A673 (cell line): ENCODE measurements at regions of chr14 and their contacts with region 1.

Region 1: GRCh38 chr14:24310646-24311604 is at the start of gene LTB4R:
- DNase-seq: peak; percentile 54
- H3K4me3 ChIP-seq: no peak within 1 kb of the TSS
- H3K27ac ChIP-seq: no peak within 1 kb of the TSS
- H3K4me1 ChIP-seq: peaks cover 13% of the 10 kb centered on the region
- H3K27me3 ChIP-seq: no peaks in the 10 kb centered on the region
- CTCF ChIP-seq: peak; percentile 15; the same call in 1 of the 2 replicates
- total RNA-seq, gene LTB4R: 6.6 and 8.9 TPM in 2 replicates

Region 2: GRCh38 chr14:24241829-24242443 is 69.0 kb before region 1 on chr14:
- CTCF ChIA-PET with region 1: interaction called, 21 read pairs
- POLR2A ChIA-PET with region 1: no interaction called
- intact Hi-C with region 1: no loop called
- DNase-seq: peak; percentile 96
- H3K4me3 ChIP-seq: peak overlapping the region; percentile 57
- H3K27ac ChIP-seq: peak overlapping the region; percentile 95
- H3K4me1 ChIP-seq: peaks cover 10% of the 10 kb centered on the region
- H3K27me3 ChIP-seq: no peaks in the 10 kb centered on the region
- CTCF ChIP-seq: peak; percentile 47

Region 3: GRCh38 chr14:24299255-24300195 is 11.4 kb before region 1 on chr14 and contains the starts of genes DHRS1 and NOP9:
- CTCF ChIA-PET with region 1: interaction called, 10 read pairs
- POLR2A ChIA-PET with region 1: interaction called, 4 read pairs
- intact Hi-C with region 1: no loop called
- DNase-seq: peak; percentile 90
- H3K4me3 ChIP-seq: peak within 1 kb of the TSS; percentile 92
- H3K27ac ChIP-seq: peak within 1 kb of the TSS; percentile 82
- H3K4me1 ChIP-seq: no peaks in the 10 kb centered on the region
- H3K27me3 ChIP-seq: no peaks in the 10 kb centered on the region
- CTCF ChIP-seq: no peak
- total RNA-seq, gene DHRS1: 13.3 and 14.5 TPM in 2 replicates
- total RNA-seq, gene NOP9: 34.0 and 37.1 TPM in 2 replicates

Region 4: DNA sequence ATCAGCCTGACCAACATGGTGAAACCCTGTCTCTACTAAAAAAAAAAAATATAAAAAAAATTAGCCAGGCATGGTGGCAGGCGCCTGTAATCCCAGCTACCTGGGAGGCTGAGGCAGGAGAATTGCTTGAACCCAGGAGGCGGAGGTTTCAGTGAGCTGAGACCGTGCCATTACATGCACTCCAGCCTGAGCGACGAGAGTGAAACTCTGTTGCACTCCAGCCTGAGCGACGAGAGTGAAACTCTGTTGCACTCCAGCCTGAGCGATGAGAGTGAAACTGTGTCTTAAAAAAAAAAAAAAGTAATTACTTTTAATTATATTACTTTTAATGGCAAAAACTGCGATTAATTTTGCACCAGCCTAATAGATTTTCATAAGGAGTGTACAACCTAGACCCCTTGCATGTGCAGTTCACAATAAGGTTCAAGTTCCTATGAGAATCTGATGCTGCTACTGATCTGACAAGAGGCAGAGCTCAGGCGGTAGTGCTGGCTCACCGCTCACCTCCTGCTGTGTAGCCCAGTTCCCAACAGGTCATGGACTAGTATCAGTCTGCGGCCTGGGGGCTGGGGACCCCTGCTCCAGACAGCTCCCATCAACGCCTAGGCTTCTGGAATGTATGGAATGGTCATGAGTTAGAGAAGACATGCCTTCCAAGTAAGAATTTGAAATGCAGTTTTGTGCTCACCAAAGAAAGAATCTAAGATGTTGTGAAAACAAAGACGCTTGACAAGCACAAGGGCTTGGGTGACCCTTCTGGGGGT is 10.5 kb after region 1 on chr14:
- CTCF ChIA-PET with region 1: interaction called, 10 read pairs
- POLR2A ChIA-PET with region 1: no interaction called
- intact Hi-C with region 1: no loop called
- DNase-seq: no peak
- H3K4me3 ChIP-seq: no peak overlapping the region
- H3K27ac ChIP-seq: no peak overlapping the region
- H3K4me1 ChIP-seq: no peaks in the 10 kb centered on the region
- H3K27me3 ChIP-seq: no peaks in the 10 kb centered on the region
- CTCF ChIP-seq: no peak

Region 5: DNA sequence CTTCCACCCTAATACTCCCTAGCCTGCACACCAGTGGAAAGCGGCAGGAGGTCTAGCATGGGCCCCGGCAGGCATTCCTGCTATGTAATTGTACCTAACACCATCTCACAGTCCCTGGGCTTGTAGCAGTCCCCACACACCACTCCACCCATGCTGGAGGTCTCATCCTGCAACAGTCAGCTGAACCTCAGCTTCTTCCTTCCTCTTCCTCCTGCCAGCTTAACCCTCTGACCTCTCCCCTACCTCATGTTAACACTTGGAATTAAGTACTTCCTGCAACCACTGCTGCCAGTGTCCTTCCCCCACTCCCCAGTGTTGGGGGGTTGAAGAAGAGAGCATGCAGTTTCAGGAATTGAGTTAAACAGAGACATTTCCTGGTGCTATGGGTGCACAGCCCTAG is 16.4 kb after region 1 on chr14:
- CTCF ChIA-PET with region 1: interaction called, 10 read pairs
- POLR2A ChIA-PET with region 1: interaction called, 14 read pairs
- intact Hi-C with region 1: no loop called
- DNase-seq: no peak
- H3K4me3 ChIP-seq: no peak overlapping the region
- H3K27ac ChIP-seq: no peak overlapping the region
- H3K4me1 ChIP-seq: no peaks in the 10 kb centered on the region
- H3K27me3 ChIP-seq: no peaks in the 10 kb centered on the region
- CTCF ChIP-seq: no peak

Region 6: DNA sequence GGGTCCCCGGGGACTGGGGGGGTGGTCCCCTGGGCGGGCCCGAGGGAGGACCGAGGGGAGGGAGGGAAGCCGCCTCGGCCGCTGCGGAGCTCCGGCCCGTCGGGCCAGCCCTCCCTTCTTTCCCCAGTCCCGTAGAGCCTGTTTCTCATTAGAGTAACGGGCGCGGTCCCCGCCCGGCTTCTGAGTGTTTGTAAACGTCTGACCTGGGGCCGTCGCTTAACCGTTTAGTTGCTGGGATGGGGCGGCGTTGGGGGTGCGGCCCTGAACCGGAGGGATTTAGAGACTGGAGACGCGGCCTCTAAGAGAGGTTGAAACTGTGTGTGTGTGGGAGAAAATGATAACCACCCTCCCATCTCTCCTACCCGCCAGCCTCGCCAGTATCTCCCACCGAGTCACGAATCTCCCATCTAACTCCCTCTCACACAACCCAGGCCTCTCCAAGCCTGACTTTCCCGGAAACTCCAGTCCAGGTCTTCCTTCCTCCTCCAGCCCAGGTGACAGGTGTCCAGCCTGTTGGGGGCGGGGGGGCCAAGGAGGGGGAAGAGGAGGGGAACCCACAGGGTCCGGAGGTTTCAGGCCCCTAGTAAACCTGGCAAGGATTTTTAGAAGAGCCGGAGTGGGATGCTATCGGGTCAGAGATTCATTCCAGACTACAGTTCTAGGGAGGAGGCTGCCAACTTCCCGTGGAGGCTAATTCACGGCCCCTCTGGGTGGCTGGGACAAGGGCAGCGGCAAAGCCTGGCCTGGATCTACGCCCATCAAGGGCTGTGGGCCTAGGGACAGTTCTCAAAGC is 56.0 kb after region 1 on chr14:
- CTCF ChIA-PET with region 1: no interaction called
- POLR2A ChIA-PET with region 1: no interaction called
- intact Hi-C with region 1: no loop called
- DNase-seq: peak; percentile 96
- H3K4me3 ChIP-seq: peak overlapping the region; percentile 95
- H3K27ac ChIP-seq: peak overlapping the region; percentile 91
- H3K4me1 ChIP-seq: peaks cover 12% of the 10 kb centered on the region
- H3K27me3 ChIP-seq: no peaks in the 10 kb centered on the region
- CTCF ChIP-seq: no peak

Region 7: GRCh38 chr14:24518851-24519250 is 207.9 kb after region 1 on chr14:
- CTCF ChIA-PET with region 1: no interaction called
- POLR2A ChIA-PET with region 1: no interaction called
- intact Hi-C with region 1: no loop called
- DNase-seq: no peak
- H3K4me3 ChIP-seq: no peak overlapping the region
- H3K27ac ChIP-seq: no peak overlapping the region
- H3K4me1 ChIP-seq: no peaks in the 10 kb centered on the region
- H3K27me3 ChIP-seq: no peaks in the 10 kb centered on the region
- CTCF ChIP-seq: no peak

Region 8: DNA sequence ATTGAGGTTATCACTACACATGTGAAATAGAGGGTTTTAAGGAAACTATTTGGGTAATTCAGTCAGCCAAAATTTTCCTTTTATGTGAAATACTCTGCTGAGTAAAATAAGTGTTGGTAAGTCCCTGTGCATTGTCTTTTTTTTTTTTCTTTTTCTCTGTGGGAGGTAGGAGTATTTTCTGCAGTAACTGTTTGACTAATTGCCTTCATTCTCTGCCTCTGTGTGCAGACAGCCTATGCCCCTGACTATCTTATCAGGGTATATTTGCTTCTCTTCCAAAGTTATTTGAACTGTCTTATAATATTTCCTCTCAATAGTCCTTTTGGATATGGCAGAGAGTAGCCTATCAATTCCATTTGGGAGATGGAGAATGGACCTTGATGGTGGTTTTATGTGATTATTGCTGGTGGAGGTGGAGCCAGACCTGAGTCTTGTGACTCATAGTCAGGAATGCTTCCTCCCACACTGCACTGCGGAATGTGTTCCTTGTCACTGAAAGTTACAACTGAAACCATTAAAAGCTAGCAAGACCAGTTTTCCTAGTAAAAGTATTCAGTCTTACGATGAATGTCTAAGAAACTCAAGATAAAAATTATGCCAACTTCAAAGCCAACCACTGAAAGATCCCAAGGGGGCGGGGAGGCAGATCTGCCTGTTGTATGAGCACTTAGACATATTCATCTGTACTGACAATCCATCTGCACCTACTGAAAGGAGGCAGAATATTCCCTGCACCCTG is 780.0 kb after region 1 on chr14:
- CTCF ChIA-PET with region 1: interaction called, 14 read pairs
- POLR2A ChIA-PET with region 1: no interaction called
- intact Hi-C with region 1: no loop called
- DNase-seq: peak; percentile 24
- H3K4me3 ChIP-seq: no peak overlapping the region
- H3K27ac ChIP-seq: no peak overlapping the region
- H3K4me1 ChIP-seq: no peaks in the 10 kb centered on the region
- H3K27me3 ChIP-seq: no peaks in the 10 kb centered on the region
- CTCF ChIP-seq: no peak